Activated T-helper 1 cell treated with anti-CD3 and anti-CD28 coated beads, Interleukin-12 subunit alpha, Interleukin-12 subunit beta, Interleukin-2, Interleukin-4 antibody, amounts not matched to agents 30 ng/mL and 10 ng/mL and 1 ng/mL, durations not matched to agents 14 hours and 24 hours and 36 hours (primary cell): ENCODE measurements at regions of chr2 and their contacts with region 1.

Region 1: DNA sequence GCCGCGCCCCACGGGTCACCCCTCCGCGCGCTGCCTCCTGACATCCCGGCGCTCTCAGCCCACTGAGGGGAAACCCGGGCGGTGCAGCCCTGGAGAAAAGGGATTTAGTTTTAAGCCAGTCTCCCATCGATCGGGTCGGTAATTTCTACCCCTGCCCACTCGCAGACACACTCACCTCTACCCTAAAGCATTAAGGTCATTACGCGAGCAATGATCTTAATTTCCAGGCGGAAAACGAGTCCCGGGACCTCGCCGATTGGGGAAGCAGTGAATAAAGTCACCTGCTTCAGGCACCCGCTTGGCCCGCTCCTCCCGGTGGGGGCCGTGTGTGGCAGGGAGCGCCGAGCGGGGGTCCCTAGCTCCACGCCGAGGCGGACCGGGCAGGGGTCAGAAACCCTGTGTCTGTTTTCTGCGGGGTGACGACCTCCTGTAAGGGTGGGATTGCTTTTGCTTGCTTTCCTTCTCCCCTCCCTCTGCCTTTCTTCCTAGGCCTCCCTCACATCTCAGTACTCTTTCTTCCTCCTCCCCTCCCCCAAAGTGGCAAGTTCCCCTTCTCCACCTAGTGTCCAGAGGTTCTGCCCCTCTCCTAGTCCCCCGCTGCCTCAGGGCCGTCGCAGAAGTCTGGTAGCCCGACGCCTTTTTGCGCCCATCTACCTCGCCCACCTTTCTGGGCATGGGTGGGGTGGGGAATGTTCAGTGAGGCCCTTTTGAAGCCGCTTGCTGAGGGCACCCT is 142.6 kb downstream of the MEIS1 start:
- DNase-seq: no peak
- H3K4me3 Mint-ChIP-seq: no peak overlapping the region
- H3K27ac Mint-ChIP-seq: no peak overlapping the region
- H3K4me1 Mint-ChIP-seq: no peaks in the 10 kb centered on the region
- H3K27me3 Mint-ChIP-seq: peaks cover 56% of the 10 kb centered on the region

Region 2: GRCh38 chr2:66437691-66438497 is 139.6 kb before region 1 on chr2:
- intact Hi-C with region 1: loop called (anchors 2 kb)
- DNase-seq: no peak
- H3K4me3 Mint-ChIP-seq: no peak overlapping the region
- H3K27ac Mint-ChIP-seq: no peak overlapping the region
- H3K4me1 Mint-ChIP-seq: peaks cover 24% of the 10 kb centered on the region
- H3K27me3 Mint-ChIP-seq: peaks cover 92% of the 10 kb centered on the region

Region 3: DNA sequence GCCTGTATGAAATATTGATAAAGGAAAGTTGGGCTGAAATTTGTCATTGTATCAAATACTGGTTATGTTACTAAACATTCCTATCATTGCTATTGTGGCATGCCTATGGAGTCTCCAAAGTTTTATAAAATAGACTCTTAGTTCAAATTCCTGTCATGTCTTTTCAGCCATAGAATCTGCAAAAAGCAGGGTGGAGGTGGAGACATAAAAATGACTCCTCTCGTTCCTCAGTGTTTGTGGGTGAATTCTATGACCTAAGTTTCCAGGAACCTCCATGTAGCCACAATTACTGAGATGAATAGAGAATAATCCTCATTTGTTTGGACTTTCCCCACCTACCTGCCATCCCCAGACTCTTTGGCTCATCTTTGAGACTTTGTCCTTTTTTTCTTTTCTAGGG is 493.3 kb after region 1 on chr2:
- intact Hi-C with region 1: no loop called
- DNase-seq: no peak
- H3K4me3 Mint-ChIP-seq: no peak overlapping the region
- H3K27ac Mint-ChIP-seq: no peak overlapping the region
- H3K4me1 Mint-ChIP-seq: no peaks in the 10 kb centered on the region
- H3K27me3 Mint-ChIP-seq: no peaks in the 10 kb centered on the region

Region 4: DNA sequence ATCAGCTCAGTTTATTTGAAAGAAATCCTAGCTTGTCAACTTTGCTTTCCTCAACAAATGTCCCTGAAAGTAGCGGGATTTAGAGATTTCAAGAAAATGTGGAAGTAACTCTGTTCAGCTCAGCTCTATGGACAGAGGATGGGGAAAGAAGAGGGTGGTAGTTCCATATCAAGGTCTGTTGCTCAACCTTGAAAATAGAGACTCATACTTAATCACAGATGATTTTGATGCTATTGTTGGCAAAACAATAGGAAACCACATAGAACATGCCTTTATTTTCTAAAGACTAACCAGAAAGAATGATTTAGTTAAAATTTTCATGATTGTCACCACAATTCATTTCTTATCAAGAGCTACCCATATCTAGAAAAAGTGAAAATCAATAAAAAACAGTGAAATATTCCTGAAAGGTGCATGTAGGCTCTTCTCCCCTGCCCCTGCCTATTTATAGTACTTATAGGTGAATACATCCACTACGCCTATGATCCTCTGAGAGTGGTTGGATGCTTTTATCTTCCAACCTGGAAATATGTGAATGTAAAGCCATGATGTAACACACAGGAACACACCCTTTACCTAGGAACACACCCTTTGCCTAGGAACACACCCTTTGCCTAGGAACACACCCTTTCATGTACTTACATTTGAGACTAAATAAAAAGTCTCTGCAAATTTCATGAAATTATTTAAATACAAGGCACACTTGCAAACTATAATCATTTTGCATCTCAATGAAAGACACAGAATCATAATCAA is 885.4 kb after region 1 on chr2:
- intact Hi-C with region 1: no loop called
- DNase-seq: no peak
- H3K4me3 Mint-ChIP-seq: no peak overlapping the region
- H3K27ac Mint-ChIP-seq: no peak overlapping the region
- H3K4me1 Mint-ChIP-seq: no peaks in the 10 kb centered on the region
- H3K27me3 Mint-ChIP-seq: no peaks in the 10 kb centered on the region